ENCODE measurements at regions of chr17 and their contacts with region 1.

Region 1: GRCh38 chr17:35119368-35120165 is at the start of gene RAD51D:
- DNase-seq: peak; percentile 81 to 83
- ATAC-seq: peak; percentile 85 to 92
- H3K4me3 ChIP-seq: peak within 1 kb of the TSS; percentile 71
- H3K27ac ChIP-seq: peak within 1 kb of the TSS; percentile 91 to 94
- H3K4me1 ChIP-seq: peaks cover 27% of the 10 kb centered on the region
- CTCF ChIP-seq: peak; percentile 98
- EP300 ChIP-seq: no peak
- POLR2A ChIP-seq: peak; percentile 52; the same call in 1 of the 2 replicates
- RAD21 ChIP-seq: peak; percentile 86 to 100
- polyA plus RNA-seq, gene RAD51D: 18.4 and 21.0 TPM in 2 replicates

Region 2: GRCh38 chr17:34542700-34543336 is 576.7 kb before region 1 on chr17:
- CTCF ChIA-PET with region 1: interaction called, 11 read pairs
- POLR2A ChIA-PET with region 1: no interaction called
- DNase-seq: peak; percentile 30 to 40
- ATAC-seq: peak in 1 of 2 experiments; percentile 83; a peak in 3 of 6 replicates
- H3K4me3 ChIP-seq: no peak overlapping the region
- H3K27ac ChIP-seq: no peak overlapping the region
- H3K4me1 ChIP-seq: no peaks in the 10 kb centered on the region
- CTCF ChIP-seq: peak; percentile 94
- EP300 ChIP-seq: no peak
- POLR2A ChIP-seq: no peak
- RAD21 ChIP-seq: peak; percentile 86 to 89

Region 3: GRCh38 chr17:34990921-34991365 is 128.6 kb before region 1 on chr17:
- CTCF ChIA-PET with region 1: interaction called, 297 read pairs
- POLR2A ChIA-PET with region 1: no interaction called
- DNase-seq: no peak
- ATAC-seq: no peak
- H3K4me3 ChIP-seq: no peak overlapping the region
- H3K27ac ChIP-seq: no peak overlapping the region
- H3K4me1 ChIP-seq: no peaks in the 10 kb centered on the region
- CTCF ChIP-seq: no peak
- EP300 ChIP-seq: no peak
- POLR2A ChIP-seq: no peak
- RAD21 ChIP-seq: no peak

Region 4: DNA sequence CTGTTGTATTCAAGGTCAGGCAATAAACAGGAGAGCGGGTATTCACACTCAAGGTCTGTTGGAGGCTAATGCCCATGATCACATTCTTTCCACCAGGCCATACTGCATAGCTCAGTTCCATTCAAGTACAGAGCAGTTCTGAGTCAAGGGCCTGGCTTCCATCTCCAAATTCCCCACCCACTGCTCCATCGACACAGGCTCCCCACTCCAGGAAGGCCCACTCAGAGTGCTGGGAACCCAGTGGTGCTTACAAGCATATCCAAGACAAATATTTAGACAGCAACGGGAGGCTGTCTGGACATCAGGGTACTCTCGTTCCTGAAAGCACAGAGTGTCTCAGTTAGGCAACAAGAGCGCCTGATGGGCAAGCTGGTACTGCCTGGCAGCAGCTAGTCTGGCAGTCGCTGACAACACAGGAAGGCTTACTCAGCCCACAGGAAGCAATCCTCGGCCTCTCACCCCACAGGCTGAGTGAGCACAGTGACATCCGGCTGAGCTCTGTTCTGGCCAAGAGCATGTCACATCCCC is 97.0 kb before region 1 on chr17:
- CTCF ChIA-PET with region 1: interaction called, 16 read pairs
- POLR2A ChIA-PET with region 1: no interaction called
- DNase-seq: peak; percentile 74 to 82
- ATAC-seq: peak; percentile 92 to 94
- H3K4me3 ChIP-seq: no peak overlapping the region
- H3K27ac ChIP-seq: peak overlapping the region; percentile 77 to 80; a peak in 5 of 6 replicates
- H3K4me1 ChIP-seq: peaks cover 31% of the 10 kb centered on the region
- CTCF ChIP-seq: no peak
- EP300 ChIP-seq: no peak
- POLR2A ChIP-seq: no peak
- RAD21 ChIP-seq: no peak

Region 5: GRCh38 chr17:35094902-35095301 is 24.7 kb before region 1 on chr17:
- CTCF ChIA-PET with region 1: interaction called, 60 read pairs
- POLR2A ChIA-PET with region 1: interaction called, 9 read pairs
- DNase-seq: peak in 1 of 2 experiments; percentile 72
- ATAC-seq: peak; percentile 79 to 83
- H3K4me3 ChIP-seq: no peak overlapping the region
- H3K27ac ChIP-seq: peak overlapping the region; percentile 29 to 61; a peak in 5 of 6 replicates
- H3K4me1 ChIP-seq: peaks cover 14% of the 10 kb centered on the region
- CTCF ChIP-seq: no peak
- EP300 ChIP-seq: no peak
- POLR2A ChIP-seq: no peak
- RAD21 ChIP-seq: no peak

Region 6: DNA sequence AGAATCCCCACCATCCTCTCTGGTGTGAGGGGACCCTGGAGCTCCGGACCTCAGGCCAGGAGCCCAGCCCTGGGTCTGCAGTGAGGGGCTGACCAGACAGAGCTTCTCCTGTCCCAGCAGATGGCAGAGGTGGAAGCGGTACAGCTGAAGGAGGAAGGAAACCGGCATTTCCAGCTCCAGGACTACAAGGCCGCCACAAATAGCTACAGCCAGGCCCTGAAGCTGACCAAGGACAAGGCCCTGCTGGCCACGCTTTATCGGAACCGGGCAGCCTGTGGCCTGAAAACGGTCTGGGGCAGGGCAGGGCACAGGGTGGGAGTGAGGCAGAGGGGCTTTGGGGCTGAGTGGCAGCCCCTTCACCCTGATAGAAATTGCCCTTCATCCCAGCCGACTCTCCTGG is 28.6 kb after region 1 on chr17:
- CTCF ChIA-PET with region 1: interaction called, 17 read pairs
- POLR2A ChIA-PET with region 1: no interaction called
- DNase-seq: no peak
- ATAC-seq: peak in 1 of 2 experiments; percentile 22; a peak in 2 of 6 replicates
- H3K4me3 ChIP-seq: no peak overlapping the region
- H3K27ac ChIP-seq: no peak overlapping the region
- H3K4me1 ChIP-seq: no peaks in the 10 kb centered on the region
- CTCF ChIP-seq: no peak
- EP300 ChIP-seq: no peak
- POLR2A ChIP-seq: no peak
- RAD21 ChIP-seq: no peak

Measured in A549 (cell line).